ENCODE measurements at regions of chr4 and their contacts with region 1.

Region 1: GRCh38 chr4:151362404-151363164 is 37.2 kb upstream of the SH3D19 start:
- DNase-seq: peak; percentile 87
- H3K4me3 ChIP-seq: no peak overlapping the region
- H3K27ac ChIP-seq: no peak overlapping the region
- H3K4me1 ChIP-seq: no peaks in the 10 kb centered on the region
- H3K27me3 ChIP-seq: no peaks in the 10 kb centered on the region
- CTCF ChIP-seq: peak; percentile 96 to 100
- POLR2A ChIP-seq: no peak

Region 2: DNA sequence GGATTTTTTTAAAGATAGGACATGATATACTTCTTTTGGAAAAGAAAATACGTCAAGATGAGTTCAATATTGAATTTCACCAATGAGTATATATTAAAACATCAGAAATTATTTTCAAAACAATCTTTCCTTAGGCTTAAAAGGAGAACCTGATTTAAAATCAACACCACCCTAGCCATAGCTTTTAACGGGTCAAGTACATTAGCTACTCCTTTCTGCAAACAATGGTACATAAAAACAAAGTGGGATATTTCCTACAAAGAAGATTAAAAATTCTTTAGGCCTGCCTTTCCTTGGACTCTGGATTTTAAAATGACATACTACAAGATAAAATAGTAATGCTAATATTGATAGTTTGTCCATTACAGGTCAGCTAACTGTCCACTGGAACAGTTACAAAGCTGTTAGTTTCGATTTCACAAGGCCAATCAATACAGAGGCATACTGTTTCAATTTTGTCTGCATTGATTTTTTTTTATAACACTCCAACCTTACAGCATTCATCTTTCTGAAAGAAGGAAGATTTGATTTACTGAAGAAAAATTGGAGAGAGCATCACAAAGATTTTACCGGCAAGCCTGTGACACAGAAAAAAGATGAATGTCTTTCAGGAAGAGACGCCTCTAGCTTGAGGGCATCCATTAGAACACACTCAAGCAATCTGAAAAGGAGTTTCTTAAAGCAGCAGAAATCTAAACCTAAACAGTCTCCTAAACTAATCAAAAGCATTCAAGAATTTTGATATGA is 683.4 kb before region 1 on chr4:
- CTCF ChIA-PET with region 1: no interaction called
- POLR2A ChIA-PET with region 1: no interaction called
- dilution Hi-C with region 1: no loop called
- intact Hi-C with region 1: no loop called
- DNase-seq: no peak
- H3K4me3 ChIP-seq: no peak overlapping the region
- H3K27ac ChIP-seq: no peak overlapping the region
- H3K4me1 ChIP-seq: no peaks in the 10 kb centered on the region
- H3K27me3 ChIP-seq: no peaks in the 10 kb centered on the region
- CTCF ChIP-seq: no peak
- POLR2A ChIP-seq: no peak

Region 3: DNA sequence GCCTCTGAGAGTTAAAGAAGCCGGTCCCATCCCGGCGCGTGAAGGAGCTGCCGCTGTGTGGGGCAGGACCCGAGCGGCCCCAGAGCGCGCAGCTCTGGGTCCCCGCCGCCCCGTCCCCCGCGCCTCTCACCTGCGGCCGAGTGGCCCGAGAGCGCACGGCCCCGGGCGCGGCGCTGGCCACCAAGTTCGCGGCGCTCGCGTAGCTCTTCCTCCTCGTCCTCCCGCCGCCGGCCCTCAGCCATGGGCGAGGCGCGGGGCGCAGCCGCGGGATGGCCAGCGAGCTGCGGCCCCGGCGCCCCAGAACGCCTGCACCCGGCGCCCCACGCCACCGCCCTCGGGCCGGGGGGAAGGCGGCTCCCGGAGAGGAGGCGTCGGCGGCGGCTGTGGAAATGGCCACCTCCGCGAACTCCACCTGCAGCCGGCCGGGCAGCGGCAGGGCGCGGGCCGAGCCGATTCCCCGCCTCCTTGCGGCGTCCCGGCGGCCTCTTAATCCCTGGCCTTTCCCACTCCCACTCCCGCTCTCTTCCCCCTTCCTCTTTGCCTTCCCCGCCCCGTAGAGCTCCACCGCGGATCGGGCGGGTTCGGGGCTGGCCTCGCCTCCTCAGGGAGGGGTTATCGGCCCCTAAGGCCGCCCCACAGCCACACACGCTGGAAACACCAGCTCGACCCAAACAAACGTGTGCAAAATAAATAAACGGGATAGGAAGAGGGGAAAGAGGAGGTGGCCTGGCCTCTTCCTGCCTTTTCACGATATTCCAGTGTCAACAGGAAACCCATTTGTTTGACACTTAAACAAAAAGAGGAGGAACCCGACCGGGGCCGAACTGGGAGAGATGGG is 37.3 kb before region 1 on chr4 and contains the start of gene SH3D19:
- CTCF ChIA-PET with region 1: interaction called, 3 read pairs
- POLR2A ChIA-PET with region 1: no interaction called
- dilution Hi-C with region 1: no loop called
- intact Hi-C with region 1: loop called (anchors 1 kb)
- DNase-seq: peak; percentile 91
- H3K4me3 ChIP-seq: peak within 1 kb of the TSS; percentile 55 to 86 (median 74)
- H3K27ac ChIP-seq: peak within 1 kb of the TSS; percentile 69
- H3K4me1 ChIP-seq: peaks cover 24% of the 10 kb centered on the region
- H3K27me3 ChIP-seq: no peaks in the 10 kb centered on the region
- CTCF ChIP-seq: no peak
- POLR2A ChIP-seq: peak; percentile 30
- total RNA-seq, gene SH3D19: 86.3 and 92.8 TPM in 2 replicates

Region 4: DNA sequence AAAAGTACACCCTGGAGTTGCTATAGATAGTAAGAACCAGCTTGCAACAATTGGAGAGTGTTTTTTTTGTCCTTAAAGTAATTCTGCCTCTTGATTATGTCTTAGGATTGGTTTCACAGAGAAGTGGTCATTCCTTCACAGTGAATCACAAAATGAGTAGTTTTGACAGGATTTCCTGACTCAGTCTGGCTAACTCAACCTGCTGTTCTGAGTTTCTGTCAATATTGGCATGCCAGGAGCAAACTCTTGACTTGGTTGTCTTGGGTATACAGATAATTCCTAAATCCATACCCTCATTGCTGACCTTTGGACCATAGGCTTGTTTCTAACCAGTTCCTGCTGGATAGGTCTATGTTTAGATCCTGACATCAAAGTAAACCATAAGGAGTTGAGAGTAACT is 55.8 kb after region 1 on chr4:
- CTCF ChIA-PET with region 1: no interaction called
- POLR2A ChIA-PET with region 1: no interaction called
- dilution Hi-C with region 1: no loop called
- intact Hi-C with region 1: loop called (anchors 1 kb)
- DNase-seq: peak; percentile 91
- H3K4me3 ChIP-seq: no peak overlapping the region
- H3K27ac ChIP-seq: peak overlapping the region; percentile 89
- H3K4me1 ChIP-seq: peaks cover 43% of the 10 kb centered on the region
- H3K27me3 ChIP-seq: no peaks in the 10 kb centered on the region
- CTCF ChIP-seq: no peak
- POLR2A ChIP-seq: peak; percentile 35

Region 5: GRCh38 chr4:151604238-151604637 is 241.7 kb after region 1 on chr4:
- CTCF ChIA-PET with region 1: interaction called, 21 read pairs
- POLR2A ChIA-PET with region 1: no interaction called
- dilution Hi-C with region 1: no loop called
- intact Hi-C with region 1: loop called (anchors 2 kb)
- DNase-seq: peak; percentile 33
- H3K4me3 ChIP-seq: no peak overlapping the region
- H3K27ac ChIP-seq: no peak overlapping the region
- H3K4me1 ChIP-seq: no peaks in the 10 kb centered on the region
- H3K27me3 ChIP-seq: peaks cover 0 to 7% of the 10 kb centered on the region in 2 experiments
- CTCF ChIP-seq: peak; percentile 29 to 44
- POLR2A ChIP-seq: no peak

Measured in endothelial cell of umbilical vein (primary cell).